A549 (cell line): ENCODE measurements at regions of chr18 and their contacts with region 1.

Region 1: GRCh38 chr18:12271376-12272235 is 17.4 kb downstream of the CIDEA start:
- DNase-seq: peak; percentile 78 to 79
- ATAC-seq: peak; percentile 98 to 99
- H3K4me3 ChIP-seq: peak overlapping the region; percentile 50
- H3K27ac ChIP-seq: peak overlapping the region; percentile 88 to 92
- H3K4me1 ChIP-seq: 0 out of 3 replicates have a peak, but pooled peaks cover 3% of the 10 kb centered on the region
- CTCF ChIP-seq: peak; percentile 87
- EP300 ChIP-seq: no peak
- POLR2A ChIP-seq: no peak
- RAD21 ChIP-seq: peak; percentile 18 to 48; a peak in 3 of 5 replicates

Region 2: DNA sequence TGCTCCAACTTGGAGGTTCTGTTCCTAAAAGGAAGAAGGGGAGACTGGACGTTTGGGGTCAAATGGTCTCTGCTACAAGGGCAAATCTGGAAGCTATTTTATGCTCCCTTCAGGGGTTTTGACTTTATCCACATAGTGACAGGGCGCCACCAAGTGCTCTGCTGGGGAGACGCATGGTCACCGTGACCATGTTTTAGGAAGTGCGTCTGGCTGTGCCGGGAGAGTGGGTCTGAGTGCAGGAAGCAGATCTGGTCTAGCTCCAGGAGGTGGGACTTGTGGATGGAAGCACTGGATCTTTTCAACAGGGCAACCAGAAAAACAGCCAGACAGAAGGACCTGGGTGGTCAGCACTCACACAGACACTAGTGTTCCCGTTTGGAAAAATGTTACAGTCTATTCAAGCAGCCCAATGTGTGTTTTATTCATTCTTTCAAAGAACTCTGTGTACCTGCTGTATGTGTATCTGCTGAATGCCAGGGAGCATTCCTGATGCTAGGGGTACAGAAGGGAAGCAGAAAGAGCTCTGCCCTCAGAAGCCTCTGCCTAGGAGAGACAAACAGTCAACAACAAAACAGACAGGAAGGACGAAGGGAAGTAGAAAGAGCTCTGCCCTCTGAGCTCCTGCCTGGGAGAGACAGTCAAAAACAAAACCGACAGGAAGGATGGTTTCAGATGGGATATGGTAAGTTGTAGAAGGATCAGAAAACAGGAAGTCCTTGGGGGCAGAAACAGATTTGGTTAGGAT is 276.0 kb before region 1 on chr18:
- CTCF ChIA-PET with region 1: no interaction called
- POLR2A ChIA-PET with region 1: no interaction called
- DNase-seq: peak; percentile 63 to 77
- ATAC-seq: peak; percentile 85 to 86
- H3K4me3 ChIP-seq: peak overlapping the region; percentile 24; the same call in 2 of the 3 replicates
- H3K27ac ChIP-seq: peak overlapping the region; percentile 85 to 96
- H3K4me1 ChIP-seq: peaks cover 44% of the 10 kb centered on the region
- CTCF ChIP-seq: peak; percentile 77
- EP300 ChIP-seq: no peak
- POLR2A ChIP-seq: no peak
- RAD21 ChIP-seq: peak; percentile 88 to 89

Region 3: DNA sequence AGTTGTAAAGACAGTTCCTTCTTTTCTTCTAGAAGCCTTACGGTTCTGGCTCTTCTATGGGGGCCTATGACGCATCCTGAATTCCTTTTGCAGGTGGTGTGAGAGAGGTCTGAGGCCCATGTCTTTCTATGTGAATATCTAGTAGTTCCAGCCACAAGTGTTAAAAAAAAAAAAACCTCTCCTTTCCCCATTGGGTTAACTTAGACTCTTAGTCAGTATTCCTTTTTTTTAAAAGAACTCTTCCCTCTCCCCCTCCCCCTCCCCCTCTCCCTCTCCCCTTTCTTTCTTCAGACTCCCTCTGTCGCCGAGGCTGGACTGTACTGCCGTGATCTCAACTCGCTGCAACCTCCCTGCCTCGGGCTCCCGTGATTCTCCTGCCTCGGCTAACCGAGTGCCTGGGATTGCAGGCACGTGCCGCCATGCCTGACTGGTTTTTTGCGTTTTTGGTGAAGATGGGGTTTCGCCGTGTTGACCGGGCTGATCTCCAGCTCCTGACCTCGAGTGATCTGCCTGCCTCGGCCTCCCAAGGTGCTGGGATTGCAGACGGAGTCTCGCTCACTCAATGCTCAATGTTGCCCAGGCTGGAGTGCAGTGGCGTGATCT is 28.8 kb before region 1 on chr18:
- CTCF ChIA-PET with region 1: no interaction called
- POLR2A ChIA-PET with region 1: no interaction called
- DNase-seq: no peak
- ATAC-seq: no peak
- H3K4me3 ChIP-seq: no peak overlapping the region
- H3K27ac ChIP-seq: no peak overlapping the region
- H3K4me1 ChIP-seq: no peaks in the 10 kb centered on the region
- CTCF ChIP-seq: no peak
- EP300 ChIP-seq: no peak
- POLR2A ChIP-seq: no peak
- RAD21 ChIP-seq: no peak

Region 4: GRCh38 chr18:12258721-12259705 is 12.6 kb before region 1 on chr18:
- CTCF ChIA-PET with region 1: interaction called, 30 read pairs
- POLR2A ChIA-PET with region 1: no interaction called
- DNase-seq: no peak
- ATAC-seq: no peak
- H3K4me3 ChIP-seq: no peak overlapping the region
- H3K27ac ChIP-seq: no peak overlapping the region
- H3K4me1 ChIP-seq: no peaks in the 10 kb centered on the region
- CTCF ChIP-seq: no peak
- EP300 ChIP-seq: no peak
- POLR2A ChIP-seq: no peak
- RAD21 ChIP-seq: no peak

Region 5: DNA sequence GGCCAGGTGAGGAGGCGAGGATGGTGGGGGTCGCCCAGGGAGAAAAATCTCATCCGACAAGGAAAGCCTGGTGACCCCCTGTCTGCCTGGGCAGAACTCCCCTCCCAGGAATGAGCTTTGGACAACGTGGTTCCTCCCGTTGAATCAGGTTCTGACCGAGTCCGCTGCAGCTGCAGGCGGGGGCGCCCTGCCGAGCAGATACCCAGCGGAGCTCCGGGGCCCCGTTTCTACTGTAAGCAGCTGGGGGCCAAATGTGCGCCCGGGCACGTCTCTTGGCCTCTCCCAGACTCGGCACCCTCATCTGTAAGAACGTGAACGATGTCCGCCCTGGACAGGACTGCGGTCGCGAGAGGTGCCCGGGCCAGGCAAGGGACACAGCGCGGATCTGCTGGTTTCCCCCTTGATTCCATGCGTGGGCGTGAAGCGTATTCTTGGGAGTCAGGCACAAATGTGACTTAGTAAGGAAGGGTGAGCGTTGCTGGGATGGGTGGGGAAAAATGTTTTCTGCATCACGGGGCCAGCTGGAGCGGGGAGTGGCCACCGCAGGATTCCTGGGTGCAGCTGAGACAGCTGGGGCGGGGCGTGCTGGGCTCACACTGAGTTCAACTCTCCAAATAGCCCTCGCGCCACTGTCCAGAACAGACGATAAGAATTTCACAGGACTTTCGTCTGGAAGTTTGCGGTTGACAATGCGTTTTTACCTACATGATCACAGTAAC is 16.2 kb after region 1 on chr18:
- CTCF ChIA-PET with region 1: interaction called, 45 read pairs
- POLR2A ChIA-PET with region 1: interaction called, 8 read pairs
- DNase-seq: peak; percentile 36 to 40
- ATAC-seq: peak; percentile 88
- H3K4me3 ChIP-seq: peak overlapping the region; percentile 57
- H3K27ac ChIP-seq: peak overlapping the region; percentile 66 to 87; a peak in 5 of 6 replicates
- H3K4me1 ChIP-seq: peaks cover 7% of the 10 kb centered on the region; the same call in 2 of the 3 replicates
- CTCF ChIP-seq: no peak
- EP300 ChIP-seq: no peak
- POLR2A ChIP-seq: no peak
- RAD21 ChIP-seq: no peak

Region 6: GRCh38 chr18:12295901-12296386 is 24.3 kb after region 1 on chr18:
- CTCF ChIA-PET with region 1: interaction called, 20 read pairs
- POLR2A ChIA-PET with region 1: no interaction called
- DNase-seq: no peak
- ATAC-seq: no peak; a peak in 1 of 6 replicates
- H3K4me3 ChIP-seq: no peak overlapping the region
- H3K27ac ChIP-seq: no peak overlapping the region
- H3K4me1 ChIP-seq: no peaks in the 10 kb centered on the region
- CTCF ChIP-seq: no peak
- EP300 ChIP-seq: no peak
- POLR2A ChIP-seq: no peak
- RAD21 ChIP-seq: no peak